ENCODE measurements at regions of chr2 and their contacts with region 1.

Region 1: GRCh38 chr2:24971536-24972314 is at the start of gene DNAJC27:
- DNase-seq: peak; percentile 99
- H3K4me3 ChIP-seq: peak within 1 kb of the TSS; percentile 87 to 93
- H3K27ac ChIP-seq: peak within 1 kb of the TSS; percentile 94 to 95
- H3K4me1 ChIP-seq: peaks cover 5 to 12% of the 10 kb centered on the region in 2 experiments; a peak in 3 of 4 replicates
- H3K27me3 ChIP-seq: no peaks in the 10 kb centered on the region
- CTCF ChIP-seq: no peak
- EP300 ChIP-seq: no peak; a peak in 1 of 4 replicates
- RAD21 ChIP-seq: no peak
- polyA plus RNA-seq, gene DNAJC27: 2.4 and 3.6 TPM in 2 replicates

Region 2: GRCh38 chr2:24721470-24721869 is 250.3 kb before region 1 on chr2:
- CTCF ChIA-PET with region 1: no interaction called
- POLR2A ChIA-PET with region 1: no interaction called
- DNase-seq: peak; percentile 59
- H3K4me3 ChIP-seq: no peak overlapping the region
- H3K27ac ChIP-seq: peak overlapping the region; percentile 1 to 73; a peak in 3 of 4 replicates
- H3K4me1 ChIP-seq: peaks cover 10 to 19% of the 10 kb centered on the region in 2 experiments; a peak in 3 of 4 replicates
- H3K27me3 ChIP-seq: no peaks in the 10 kb centered on the region
- CTCF ChIP-seq: no peak
- EP300 ChIP-seq: peak in 1 of 2 experiments; percentile 76; a peak in 2 of 4 replicates
- RAD21 ChIP-seq: peak; percentile 37; the same call in 1 of the 2 replicates

Region 3: DNA sequence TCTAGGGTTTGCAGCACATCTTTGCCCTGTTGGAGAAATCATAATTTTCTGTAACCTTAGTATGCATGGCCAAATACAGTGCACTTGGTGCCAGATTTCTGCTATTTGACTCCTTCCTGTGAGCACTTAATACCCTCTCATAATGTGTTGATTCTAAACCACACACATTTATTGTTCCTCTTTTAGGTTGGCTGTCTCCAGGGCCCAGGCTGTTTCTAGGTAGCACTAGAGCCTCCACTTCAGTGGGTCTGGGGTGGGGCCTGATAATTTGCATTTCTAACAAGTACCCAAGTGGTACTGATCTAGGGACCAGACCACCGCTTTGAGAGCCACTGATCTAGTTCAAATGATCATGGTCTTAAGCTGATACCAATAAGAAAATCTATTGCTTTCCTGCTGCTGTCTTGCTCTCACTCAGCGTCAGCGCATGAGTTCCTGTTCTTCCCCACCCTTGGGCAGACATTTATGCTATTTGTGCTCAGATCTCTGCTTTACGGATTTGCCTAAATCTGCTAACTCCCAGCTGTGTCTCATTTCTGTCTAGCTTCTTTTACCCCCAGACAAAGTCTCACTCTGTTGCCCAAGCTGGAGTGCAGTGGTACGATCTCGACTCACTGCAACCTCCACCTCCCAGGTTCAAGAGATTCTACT is 185.9 kb before region 1 on chr2:
- CTCF ChIA-PET with region 1: no interaction called
- POLR2A ChIA-PET with region 1: no interaction called
- DNase-seq: no peak
- H3K4me3 ChIP-seq: no peak overlapping the region
- H3K27ac ChIP-seq: no peak overlapping the region
- H3K4me1 ChIP-seq: no peaks in the 10 kb centered on the region
- H3K27me3 ChIP-seq: no peaks in the 10 kb centered on the region
- CTCF ChIP-seq: no peak
- EP300 ChIP-seq: no peak
- RAD21 ChIP-seq: no peak

Region 4: GRCh38 chr2:24993406-24994145 is 21.9 kb after region 1 on chr2:
- CTCF ChIA-PET with region 1: interaction called, 32 read pairs
- POLR2A ChIA-PET with region 1: no interaction called
- DNase-seq: no peak
- H3K4me3 ChIP-seq: no peak overlapping the region
- H3K27ac ChIP-seq: no peak overlapping the region
- H3K4me1 ChIP-seq: peaks cover 2 to 9% of the 10 kb centered on the region in 2 experiments; a peak in 2 of 4 replicates
- H3K27me3 ChIP-seq: no peaks in the 10 kb centered on the region
- CTCF ChIP-seq: no peak
- EP300 ChIP-seq: no peak
- RAD21 ChIP-seq: no peak

Region 5: GRCh38 chr2:25032094-25032493 is 60.4 kb after region 1 on chr2:
- CTCF ChIA-PET with region 1: interaction called, 22 read pairs
- POLR2A ChIA-PET with region 1: interaction called, 3 read pairs
- DNase-seq: no peak
- H3K4me3 ChIP-seq: no peak overlapping the region
- H3K27ac ChIP-seq: no peak overlapping the region
- H3K4me1 ChIP-seq: peaks cover 3 to 15% of the 10 kb centered on the region in 2 experiments; a peak in 2 of 4 replicates
- H3K27me3 ChIP-seq: no peaks in the 10 kb centered on the region
- CTCF ChIP-seq: no peak
- EP300 ChIP-seq: no peak
- RAD21 ChIP-seq: no peak

Region 6: DNA sequence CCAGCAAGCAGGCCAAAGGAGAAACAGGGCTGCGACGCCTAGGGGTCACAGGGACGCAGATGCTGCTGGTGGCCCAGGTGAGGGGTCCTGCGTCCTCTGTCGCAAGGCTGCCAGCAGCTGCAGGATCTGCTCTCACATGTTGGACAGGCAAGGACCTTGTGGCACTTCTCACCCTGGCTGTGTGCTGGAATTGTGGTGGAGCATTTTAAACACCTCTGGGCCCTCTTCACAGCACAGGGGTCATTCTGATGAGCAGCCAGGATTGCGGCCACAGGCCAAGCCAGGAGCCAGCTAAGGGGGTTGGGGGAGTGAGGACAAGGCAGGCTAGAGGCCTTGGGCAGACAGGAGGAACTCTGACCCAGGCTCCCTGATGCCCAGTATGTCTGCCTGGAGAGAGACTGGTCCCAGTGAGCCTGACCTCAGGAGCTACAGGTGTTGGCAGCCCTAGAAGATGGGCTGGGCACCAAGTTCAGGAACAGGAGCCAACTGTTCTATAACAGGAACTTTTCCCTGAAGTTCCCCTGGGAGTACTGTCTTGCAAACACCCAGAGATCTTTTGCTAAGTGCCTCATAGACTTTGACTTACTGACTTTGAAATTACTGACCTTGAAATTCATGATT is 110.4 kb after region 1 on chr2:
- CTCF ChIA-PET with region 1: interaction called, 26 read pairs
- POLR2A ChIA-PET with region 1: no interaction called
- DNase-seq: no peak
- H3K4me3 ChIP-seq: no peak overlapping the region
- H3K27ac ChIP-seq: no peak overlapping the region
- H3K4me1 ChIP-seq: peaks cover 12 to 17% of the 10 kb centered on the region in 2 experiments; a peak in 3 of 4 replicates
- H3K27me3 ChIP-seq: no peaks in the 10 kb centered on the region
- CTCF ChIP-seq: no peak
- EP300 ChIP-seq: no peak
- RAD21 ChIP-seq: no peak

Region 7: GRCh38 chr2:25115902-25116301 is 144.2 kb after region 1 on chr2:
- CTCF ChIA-PET with region 1: interaction called, 519 read pairs
- POLR2A ChIA-PET with region 1: no interaction called
- DNase-seq: no peak
- H3K4me3 ChIP-seq: no peak overlapping the region
- H3K27ac ChIP-seq: no peak overlapping the region; a peak in 1 of 4 replicates
- H3K4me1 ChIP-seq: peaks cover 0 to 2% of the 10 kb centered on the region in 2 experiments; a peak in 1 of 4 replicates
- H3K27me3 ChIP-seq: no peaks in the 10 kb centered on the region
- CTCF ChIP-seq: no peak
- EP300 ChIP-seq: no peak
- RAD21 ChIP-seq: no peak

Region 8: GRCh38 chr2:25165992-25166875 is 194.5 kb after region 1 on chr2:
- CTCF ChIA-PET with region 1: interaction called, 23 read pairs
- POLR2A ChIA-PET with region 1: no interaction called
- DNase-seq: peak; percentile 73
- H3K4me3 ChIP-seq: no peak overlapping the region
- H3K27ac ChIP-seq: no peak overlapping the region
- H3K4me1 ChIP-seq: peaks cover 0 to 8% of the 10 kb centered on the region in 2 experiments; a peak in 1 of 4 replicates
- H3K27me3 ChIP-seq: peaks cover 42% of the 10 kb centered on the region
- CTCF ChIP-seq: peak; percentile 41
- EP300 ChIP-seq: no peak
- RAD21 ChIP-seq: peak; percentile 79